Psoas muscle (tissue), 8 donors: ENCODE measurements at regions of chr3 and their contacts with region 1.

Region 1: DNA sequence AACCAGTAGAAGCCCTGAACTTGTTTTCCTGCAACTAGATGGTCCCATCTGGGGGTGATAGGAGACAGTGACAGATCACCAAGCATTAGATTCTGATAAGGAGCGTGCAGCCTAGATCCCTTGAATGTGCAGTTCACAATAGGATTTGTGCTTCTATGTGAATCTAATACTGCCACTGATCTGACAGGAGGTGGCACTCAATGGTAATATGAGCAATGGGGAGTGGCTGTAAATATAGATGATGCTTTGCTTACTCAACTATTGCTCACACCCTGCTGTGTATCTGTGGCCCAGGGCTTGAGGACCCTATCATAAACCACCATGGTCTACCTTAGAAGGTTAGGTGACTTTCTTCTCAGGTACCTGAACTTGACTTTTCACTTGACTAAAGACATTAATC is 417.1 kb upstream of the ARHGEF26 start:
- DNase-seq: no peak
- ATAC-seq: no peak
- H3K4me3 ChIP-seq: no peak overlapping the region
- H3K27ac ChIP-seq: no peak overlapping the region
- H3K4me1 ChIP-seq: no peaks in the 10 kb centered on the region
- H3K27me3 ChIP-seq: no peaks in the 10 kb centered on the region
- CTCF ChIP-seq: no peak

Region 2: GRCh38 chr3:153061938-153062528 is 642.1 kb before region 1 on chr3:
- intact Hi-C with region 1: loop called in 1 of 2 experiments (anchors 5 kb)
- DNase-seq: no peak
- ATAC-seq: no peak
- H3K4me3 ChIP-seq: no peak overlapping the region
- H3K27ac ChIP-seq: no peak overlapping the region
- H3K4me1 ChIP-seq: no peaks in the 10 kb centered on the region
- H3K27me3 ChIP-seq: no peaks in the 10 kb centered on the region
- CTCF ChIP-seq: no peak